Activated CD4-positive, alpha-beta T cell treated with anti-CD3 and anti-CD28 coated beads, Interleukin-2, amount 10 ng/mL, durations not matched to agents 24 days and 14 days (primary cell): ENCODE measurements at regions of chr6 and their contacts with region 1.

Region 1: GRCh38 chr6:53956068-53956711 is 155.1 kb upstream of the MLIP start:
- DNase-seq: peak; percentile 68
- H3K4me3 Mint-ChIP-seq: no peak overlapping the region
- H3K27ac Mint-ChIP-seq: no peak overlapping the region
- H3K4me1 Mint-ChIP-seq: no peaks in the 10 kb centered on the region
- H3K27me3 Mint-ChIP-seq: peaks cover 7% of the 10 kb centered on the region

Region 2: DNA sequence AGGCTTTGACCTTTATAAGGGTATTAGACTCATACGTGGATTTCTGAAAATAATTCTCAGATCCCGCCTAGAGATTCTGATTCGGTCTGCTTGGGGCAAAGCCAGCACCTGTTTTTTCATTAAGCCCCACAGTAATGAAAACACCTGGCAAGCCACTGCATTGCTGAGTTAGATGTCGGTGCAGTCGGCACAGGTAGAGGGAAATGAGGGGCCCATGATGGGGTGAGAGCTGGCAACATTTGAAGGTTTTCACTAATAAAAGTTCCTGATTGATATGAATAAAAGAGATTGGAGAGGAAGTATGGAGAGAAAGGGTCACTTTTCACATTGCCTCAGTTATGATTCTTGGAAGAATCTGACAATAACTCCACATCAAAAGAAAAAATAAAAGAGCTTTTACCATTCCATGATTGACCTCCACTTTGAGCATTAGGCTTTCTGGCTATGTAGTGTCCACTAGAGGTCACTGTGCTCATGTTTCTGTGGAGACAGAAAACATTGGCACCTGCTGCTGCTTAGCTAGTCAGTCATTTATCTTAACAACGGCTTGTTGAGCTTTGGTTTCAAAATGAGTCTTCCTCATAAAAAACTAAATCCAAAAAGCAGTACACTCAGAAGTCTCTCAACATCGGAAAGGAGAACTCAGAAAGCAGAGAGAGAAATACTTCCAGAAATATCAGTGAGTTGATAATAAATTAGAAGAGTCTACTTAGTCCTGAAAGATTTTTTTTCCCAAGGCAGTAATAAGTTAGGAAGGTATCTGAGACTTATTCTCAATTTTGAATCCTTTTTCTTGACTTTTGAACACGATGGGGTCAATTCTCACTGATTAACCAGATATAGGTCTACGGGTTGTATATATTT is 237.4 kb before region 1 on chr6:
- intact Hi-C with region 1: loop called (anchors 5 kb)
- DNase-seq: peak; percentile 81
- H3K4me3 Mint-ChIP-seq: no peak overlapping the region
- H3K27ac Mint-ChIP-seq: no peak overlapping the region
- H3K4me1 Mint-ChIP-seq: peaks cover 5% of the 10 kb centered on the region
- H3K27me3 Mint-ChIP-seq: peaks cover 28% of the 10 kb centered on the region

Region 3: GRCh38 chr6:53752856-53753255 is 203.3 kb before region 1 on chr6:
- intact Hi-C with region 1: no loop called
- DNase-seq: no peak
- H3K4me3 Mint-ChIP-seq: no peak overlapping the region
- H3K27ac Mint-ChIP-seq: no peak overlapping the region
- H3K4me1 Mint-ChIP-seq: no peaks in the 10 kb centered on the region
- H3K27me3 Mint-ChIP-seq: peaks cover 15% of the 10 kb centered on the region

Region 4: GRCh38 chr6:54074578-54075195 is 118.5 kb after region 1 on chr6:
- intact Hi-C with region 1: no loop called
- DNase-seq: no peak
- H3K4me3 Mint-ChIP-seq: no peak overlapping the region
- H3K27ac Mint-ChIP-seq: no peak overlapping the region
- H3K4me1 Mint-ChIP-seq: no peaks in the 10 kb centered on the region
- H3K27me3 Mint-ChIP-seq: no peaks in the 10 kb centered on the region

Region 5: GRCh38 chr6:54135665-54136369 is 179.6 kb after region 1 on chr6:
- intact Hi-C with region 1: no loop called
- DNase-seq: no peak
- H3K4me3 Mint-ChIP-seq: no peak overlapping the region
- H3K27ac Mint-ChIP-seq: no peak overlapping the region
- H3K4me1 Mint-ChIP-seq: no peaks in the 10 kb centered on the region
- H3K27me3 Mint-ChIP-seq: no peaks in the 10 kb centered on the region